K562 (cell line): ENCODE measurements at regions of chr2 and their contacts with region 1.

Region 1: DNA sequence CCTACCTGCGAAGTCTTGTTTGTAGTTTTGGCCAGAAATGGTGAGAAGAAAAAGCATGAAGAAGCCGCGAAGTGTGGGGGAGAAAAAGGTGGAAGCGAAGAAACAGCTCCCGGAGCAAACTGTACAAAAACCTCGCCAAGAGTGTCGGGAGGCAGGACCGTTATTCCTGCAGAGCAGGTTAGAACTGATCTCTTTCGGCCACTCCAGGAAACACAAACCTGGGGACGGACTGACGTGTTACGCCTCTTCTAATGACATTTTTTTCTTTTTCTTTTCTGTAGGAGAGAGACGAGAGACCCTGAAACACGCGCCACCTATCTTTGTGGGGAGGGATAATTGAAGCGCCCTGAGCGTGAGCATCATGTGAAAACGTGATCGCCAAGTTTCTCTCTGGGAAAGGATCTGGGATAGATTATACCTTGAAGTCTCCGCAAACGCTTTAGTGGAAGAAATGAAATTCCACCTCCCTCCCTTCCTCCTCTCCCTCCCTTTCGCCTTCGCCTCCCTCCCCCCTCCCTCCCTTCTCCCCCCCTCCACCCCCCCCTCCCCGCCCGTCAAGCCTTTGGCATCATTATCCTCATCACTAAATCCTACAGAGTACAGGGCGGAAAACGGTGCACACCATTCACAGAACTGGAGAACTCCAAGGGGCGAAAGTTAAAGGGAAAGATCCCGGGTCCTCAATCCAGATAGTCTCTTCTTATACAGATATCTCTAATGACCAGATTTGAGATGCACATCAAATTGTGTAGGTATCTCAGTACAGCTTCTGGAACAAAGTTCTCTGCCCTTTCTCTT is at the start of gene ZEB2:
- DNase-seq: peak; percentile 50 to 93 (median 68)
- ATAC-seq: peak; percentile 58
- H3K4me3 ChIP-seq: peak within 1 kb of the TSS; percentile 91
- H3K27ac ChIP-seq: peak within 1 kb of the TSS; percentile 95
- H3K4me1 ChIP-seq: peaks cover 13 to 19% of the 10 kb centered on the region in 2 experiments
- H3K27me3 ChIP-seq: no peaks in the 10 kb centered on the region
- CTCF ChIP-seq: peak; percentile 61 to 81 (median 79)
- EP300 ChIP-seq: peak; percentile 55
- POLR2A ChIP-seq: peak; percentile 98
- RAD21 ChIP-seq: peak; percentile 56 to 61
- polyA plus RNA-seq, gene ZEB2: 15.1 to 30.1 TPM

Region 2: GRCh38 chr2:144230448-144231085 is 289.6 kb before region 1 on chr2:
- CTCF ChIA-PET with region 1: no interaction called
- POLR2A ChIA-PET with region 1: no interaction called
- in situ Hi-C with region 1: no loop called
- intact Hi-C with region 1: loop called (anchors 5 kb)
- DNase-seq: peak in 2 of 4 experiments; percentile 30 to 41
- ATAC-seq: peak; percentile 78
- H3K4me3 ChIP-seq: no peak overlapping the region
- H3K27ac ChIP-seq: peak overlapping the region; percentile 75
- H3K4me1 ChIP-seq: peaks cover 0 to 36% of the 10 kb centered on the region in 2 experiments; a peak in 3 of 5 replicates
- H3K27me3 ChIP-seq: no peaks in the 10 kb centered on the region
- CTCF ChIP-seq: no peak
- EP300 ChIP-seq: peak; percentile 79
- POLR2A ChIP-seq: no peak
- RAD21 ChIP-seq: peak in 1 of 2 experiments; percentile 13; a peak in 2 of 4 replicates

Region 3: DNA sequence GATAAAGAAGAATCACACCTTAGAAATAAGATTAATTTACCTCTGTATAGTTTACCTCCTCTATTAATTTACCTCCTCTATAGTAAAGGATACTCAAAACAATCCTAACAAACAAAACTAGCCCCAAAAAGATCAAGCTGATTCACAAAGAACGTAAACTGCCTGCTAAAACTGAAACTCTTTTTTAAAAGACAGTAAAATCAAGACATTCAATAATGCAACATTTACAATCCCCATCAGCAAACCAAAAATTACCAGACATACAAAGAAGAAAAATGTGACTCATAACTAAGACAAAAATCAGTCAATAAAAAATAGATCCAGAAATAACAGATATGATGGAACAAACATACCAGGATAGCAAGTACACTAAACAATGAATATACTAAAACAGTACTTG is 215.9 kb before region 1 on chr2:
- CTCF ChIA-PET with region 1: no interaction called
- POLR2A ChIA-PET with region 1: no interaction called
- in situ Hi-C with region 1: no loop called
- intact Hi-C with region 1: no loop called
- DNase-seq: no peak
- ATAC-seq: no peak
- H3K4me3 ChIP-seq: no peak overlapping the region
- H3K27ac ChIP-seq: no peak overlapping the region
- H3K4me1 ChIP-seq: no peaks in the 10 kb centered on the region
- H3K27me3 ChIP-seq: no peaks in the 10 kb centered on the region
- CTCF ChIP-seq: no peak
- EP300 ChIP-seq: no peak
- POLR2A ChIP-seq: no peak
- RAD21 ChIP-seq: no peak

Region 4: GRCh38 chr2:144471305-144472045 is 48.7 kb before region 1 on chr2:
- CTCF ChIA-PET with region 1: no interaction called
- POLR2A ChIA-PET with region 1: no interaction called
- in situ Hi-C with region 1: no loop called
- intact Hi-C with region 1: no loop called
- DNase-seq: no peak
- ATAC-seq: no peak
- H3K4me3 ChIP-seq: no peak overlapping the region
- H3K27ac ChIP-seq: no peak overlapping the region
- H3K4me1 ChIP-seq: peaks cover 0 to 14% of the 10 kb centered on the region in 2 experiments; a peak in 4 of 5 replicates
- H3K27me3 ChIP-seq: no peaks in the 10 kb centered on the region
- CTCF ChIP-seq: no peak
- EP300 ChIP-seq: no peak
- POLR2A ChIP-seq: no peak
- RAD21 ChIP-seq: no peak

Region 5: GRCh38 chr2:144505245-144505831 is 14.8 kb before region 1 on chr2:
- CTCF ChIA-PET with region 1: interaction called, 8 read pairs
- POLR2A ChIA-PET with region 1: interaction called, 6 read pairs
- in situ Hi-C with region 1: no loop called
- intact Hi-C with region 1: loop called (anchors 2 kb)
- DNase-seq: peak in 3 of 4 experiments; percentile 25 to 84 (median 66)
- ATAC-seq: peak; percentile 81
- H3K4me3 ChIP-seq: no peak overlapping the region
- H3K27ac ChIP-seq: peak overlapping the region; percentile 50
- H3K4me1 ChIP-seq: peaks cover 24 to 86% of the 10 kb centered on the region in 2 experiments
- H3K27me3 ChIP-seq: no peaks in the 10 kb centered on the region
- CTCF ChIP-seq: no peak
- EP300 ChIP-seq: peak; percentile 62; the same call in 1 of the 2 replicates
- POLR2A ChIP-seq: peak; percentile 39; the same call in 1 of the 2 replicates
- RAD21 ChIP-seq: no peak; a peak in 1 of 4 replicates

Region 6: DNA sequence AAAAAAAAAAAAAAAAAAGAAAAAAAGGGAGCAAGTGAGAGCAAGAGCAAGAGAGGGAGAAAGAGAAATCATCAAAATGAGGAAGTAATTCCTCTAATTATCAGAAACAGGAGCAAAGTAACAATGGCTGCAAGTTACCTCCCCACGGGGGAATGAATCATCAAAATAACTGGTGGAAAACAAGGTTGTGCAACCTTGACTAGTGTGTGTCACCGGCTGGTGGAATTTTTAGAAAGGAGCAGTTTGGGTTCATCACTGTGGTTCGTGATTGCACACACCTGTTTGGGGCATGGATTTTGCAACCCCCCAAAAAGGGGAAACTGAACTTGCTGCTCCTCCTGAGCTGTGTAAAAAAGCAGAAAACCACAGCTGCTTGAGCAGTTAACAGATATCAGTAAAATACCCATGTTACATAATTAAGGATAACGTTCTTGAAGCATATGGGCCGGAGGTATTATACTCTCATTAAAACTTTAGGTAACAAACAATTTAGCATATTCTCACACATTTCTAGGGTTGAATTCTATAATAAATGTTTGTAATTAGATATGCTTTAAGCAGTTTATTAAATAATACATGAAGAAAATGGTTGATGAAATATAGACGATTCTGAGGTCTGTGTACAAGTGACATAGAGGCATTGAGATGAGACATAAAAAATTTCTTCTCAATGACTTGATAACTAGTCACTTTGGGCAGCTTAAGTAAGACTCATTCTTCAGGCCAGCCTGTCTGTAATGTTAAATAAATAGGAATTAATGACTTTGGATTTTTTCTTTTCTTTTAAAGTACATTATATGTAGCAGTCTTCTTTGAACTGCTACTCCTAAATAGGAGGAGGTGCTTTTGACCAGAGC is 183.9 kb after region 1 on chr2:
- CTCF ChIA-PET with region 1: no interaction called
- POLR2A ChIA-PET with region 1: no interaction called
- in situ Hi-C with region 1: no loop called
- intact Hi-C with region 1: loop called (anchors 10 kb)
- DNase-seq: peak; percentile 14 to 79 (median 38)
- ATAC-seq: peak; percentile 87
- H3K4me3 ChIP-seq: no peak overlapping the region
- H3K27ac ChIP-seq: peak overlapping the region; percentile 51
- H3K4me1 ChIP-seq: peaks cover 0 to 25% of the 10 kb centered on the region in 2 experiments; a peak in 3 of 5 replicates
- H3K27me3 ChIP-seq: no peaks in the 10 kb centered on the region
- CTCF ChIP-seq: 0 out of 6 replicates have a peak, but pooled peaks of 1 of the 3 experiments have one; percentile 2
- EP300 ChIP-seq: peak; percentile 69
- POLR2A ChIP-seq: no peak
- RAD21 ChIP-seq: peak in 1 of 2 experiments; percentile 51; a peak in 3 of 4 replicates

Region 7: DNA sequence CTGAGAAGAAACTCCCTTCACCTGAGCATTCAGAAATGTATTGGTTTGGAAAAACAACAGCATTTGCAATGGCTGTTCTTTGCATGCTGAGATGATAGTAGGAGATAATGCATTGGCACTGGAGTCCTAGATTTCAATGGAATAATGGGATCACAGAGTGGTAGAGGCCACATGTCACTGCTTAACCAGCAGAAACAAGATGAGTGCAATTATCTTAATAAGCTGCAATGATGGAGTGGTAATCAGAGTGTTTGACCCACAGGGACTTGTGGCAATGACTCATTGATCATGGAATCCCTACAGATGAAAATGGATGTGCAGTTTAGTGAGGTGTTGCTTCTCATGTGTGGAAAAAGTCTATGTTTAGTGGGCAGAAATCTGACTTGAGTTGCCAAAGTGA is 218.6 kb after region 1 on chr2:
- CTCF ChIA-PET with region 1: no interaction called
- POLR2A ChIA-PET with region 1: no interaction called
- in situ Hi-C with region 1: no loop called
- intact Hi-C with region 1: no loop called
- DNase-seq: no peak
- ATAC-seq: no peak
- H3K4me3 ChIP-seq: no peak overlapping the region
- H3K27ac ChIP-seq: no peak overlapping the region
- H3K4me1 ChIP-seq: no peaks in the 10 kb centered on the region
- H3K27me3 ChIP-seq: no peaks in the 10 kb centered on the region
- CTCF ChIP-seq: no peak
- EP300 ChIP-seq: no peak
- POLR2A ChIP-seq: no peak
- RAD21 ChIP-seq: no peak